ENCODE measurements at regions of chr1 and their contacts with region 1.

Region 1: GRCh38 chr1:1906185-1907097 is 8.6 kb upstream of the CALML6 start:
- DNase-seq: peak; percentile 86 to 87
- H3K4me3 ChIP-seq: no peak overlapping the region
- H3K27ac ChIP-seq: peak overlapping the region in 1 of 3 donors; percentile 5
- H3K4me1 ChIP-seq: peaks cover 12 to 19% of the 10 kb centered on the region in 2 donors
- H3K27me3 ChIP-seq: no peaks in the 10 kb centered on the region
- CTCF ChIP-seq: peak; percentile 71 to 98 (median 92)
- POLR2A ChIP-seq: no peak

Region 2: DNA sequence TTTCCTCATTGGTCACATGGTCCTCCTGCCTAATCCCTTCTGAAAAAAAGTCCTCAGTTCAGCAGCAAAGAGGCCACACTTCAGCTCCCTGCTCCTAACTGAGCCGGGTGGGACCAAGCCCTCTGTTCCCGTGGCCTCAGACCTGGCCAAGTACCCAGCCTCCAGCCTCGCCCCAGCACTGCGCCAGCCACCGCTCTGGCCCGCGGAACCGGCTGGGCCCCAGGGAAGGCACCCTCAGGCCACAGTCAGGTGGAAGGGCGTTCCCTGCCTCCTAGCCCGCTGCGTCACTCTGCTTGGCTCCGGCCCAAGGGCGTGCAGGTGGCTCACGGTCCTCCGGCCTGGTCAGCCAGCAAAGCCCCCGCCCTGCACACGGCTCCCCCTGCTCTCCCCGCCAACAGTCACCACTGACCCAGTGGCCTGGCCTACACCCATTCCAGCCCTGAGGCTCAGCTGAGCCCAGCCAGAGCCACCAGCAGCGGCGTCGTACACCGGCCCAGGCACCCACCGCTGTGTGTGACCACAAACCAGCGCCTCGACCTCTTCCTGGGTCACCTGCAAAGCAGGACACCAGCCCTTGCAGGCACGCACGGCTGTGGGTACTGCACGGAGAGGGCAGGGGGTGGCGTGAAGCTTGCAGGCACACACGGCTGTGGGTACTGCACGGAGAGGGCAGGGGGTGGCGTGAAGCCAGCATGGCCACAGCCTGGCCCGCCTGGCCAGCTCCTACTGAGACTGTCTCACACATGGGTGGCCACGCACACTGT is 147.6 kb before region 1 on chr1:
- intact Hi-C with region 1: loop called (anchors 5 kb)
- DNase-seq: peak; percentile 99
- H3K4me3 ChIP-seq: peak overlapping the region in 1 of 3 donors; percentile 4
- H3K27ac ChIP-seq: peak overlapping the region; percentile 90 to 95 (median 91)
- H3K4me1 ChIP-seq: peaks cover 28 to 36% of the 10 kb centered on the region in 2 donors
- H3K27me3 ChIP-seq: no peaks in the 10 kb centered on the region
- CTCF ChIP-seq: no peak
- POLR2A ChIP-seq: peak in 1 of 2 donors; percentile 67

Region 3: DNA sequence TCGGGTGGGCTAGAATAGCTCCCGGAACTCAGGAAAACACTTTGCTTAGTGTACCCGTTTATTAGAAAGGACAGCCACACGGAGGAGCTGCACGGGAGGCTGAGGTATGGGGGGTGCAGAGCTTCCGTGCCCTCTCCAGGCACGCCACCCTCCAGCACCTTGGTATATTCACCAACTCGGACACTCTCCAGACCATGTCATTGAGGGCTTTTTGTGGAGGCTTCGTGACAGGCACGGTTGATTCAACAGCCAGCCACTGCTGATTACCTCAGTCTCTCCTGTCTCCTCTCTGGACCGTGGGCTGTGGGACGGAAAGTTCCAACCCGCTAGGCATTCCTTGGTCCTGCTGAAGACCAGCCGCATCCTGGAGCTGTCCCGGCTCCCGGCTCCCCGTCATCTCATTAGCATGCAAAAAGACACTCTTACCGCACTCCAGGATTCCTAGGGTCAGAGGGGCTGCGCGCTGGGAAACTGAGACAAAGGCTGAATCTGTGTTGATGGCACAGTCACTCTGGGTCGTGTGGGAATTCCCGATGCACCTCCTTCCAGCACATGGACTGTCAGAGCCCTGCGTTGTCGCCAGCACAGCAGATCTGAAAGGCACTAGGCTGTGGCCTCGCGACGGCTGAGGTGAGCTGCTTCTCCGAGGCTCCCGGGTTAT is 209.4 kb after region 1 on chr1:
- intact Hi-C with region 1: no loop called
- DNase-seq: no peak
- H3K4me3 ChIP-seq: no peak overlapping the region
- H3K27ac ChIP-seq: no peak overlapping the region
- H3K4me1 ChIP-seq: no peaks in the 10 kb centered on the region
- H3K27me3 ChIP-seq: no peaks in the 10 kb centered on the region
- CTCF ChIP-seq: no peak
- POLR2A ChIP-seq: no peak